Activated CD4-positive, alpha-beta T cell treated with anti-CD3 and anti-CD28 coated beads for 36 hours (primary cell): ENCODE measurements at regions of chr11 and their contacts with region 1.

Region 1: GRCh38 chr11:118435893-118436624 is at the start of gene KMT2A:
- DNase-seq: peak; percentile 96
- ATAC-seq: peak; percentile 41
- H3K4me3 Mint-ChIP-seq: peak within 1 kb of the TSS; percentile 94
- H3K27ac Mint-ChIP-seq: peak within 1 kb of the TSS; percentile 94
- H3K4me1 Mint-ChIP-seq: peaks cover 37% of the 10 kb centered on the region
- H3K27me3 Mint-ChIP-seq: no peaks in the 10 kb centered on the region
- total RNA-seq, gene KMT2A: 64.1 to 67.1 TPM

Region 2: GRCh38 chr11:117817368-117818040 is 618.6 kb before region 1 on chr11:
- CTCF ChIA-PET with region 1: no interaction called
- POLR2A ChIA-PET with region 1: no interaction called
- intact Hi-C with region 1: loop called in 1 of 2 experiments (anchors 5 kb)
- DNase-seq: peak; percentile 95
- ATAC-seq: peak; percentile 45
- H3K4me3 Mint-ChIP-seq: peak overlapping the region; percentile 49
- H3K27ac Mint-ChIP-seq: peak overlapping the region; percentile 99
- H3K4me1 Mint-ChIP-seq: peaks cover 59% of the 10 kb centered on the region
- H3K27me3 Mint-ChIP-seq: no peaks in the 10 kb centered on the region

Region 3: DNA sequence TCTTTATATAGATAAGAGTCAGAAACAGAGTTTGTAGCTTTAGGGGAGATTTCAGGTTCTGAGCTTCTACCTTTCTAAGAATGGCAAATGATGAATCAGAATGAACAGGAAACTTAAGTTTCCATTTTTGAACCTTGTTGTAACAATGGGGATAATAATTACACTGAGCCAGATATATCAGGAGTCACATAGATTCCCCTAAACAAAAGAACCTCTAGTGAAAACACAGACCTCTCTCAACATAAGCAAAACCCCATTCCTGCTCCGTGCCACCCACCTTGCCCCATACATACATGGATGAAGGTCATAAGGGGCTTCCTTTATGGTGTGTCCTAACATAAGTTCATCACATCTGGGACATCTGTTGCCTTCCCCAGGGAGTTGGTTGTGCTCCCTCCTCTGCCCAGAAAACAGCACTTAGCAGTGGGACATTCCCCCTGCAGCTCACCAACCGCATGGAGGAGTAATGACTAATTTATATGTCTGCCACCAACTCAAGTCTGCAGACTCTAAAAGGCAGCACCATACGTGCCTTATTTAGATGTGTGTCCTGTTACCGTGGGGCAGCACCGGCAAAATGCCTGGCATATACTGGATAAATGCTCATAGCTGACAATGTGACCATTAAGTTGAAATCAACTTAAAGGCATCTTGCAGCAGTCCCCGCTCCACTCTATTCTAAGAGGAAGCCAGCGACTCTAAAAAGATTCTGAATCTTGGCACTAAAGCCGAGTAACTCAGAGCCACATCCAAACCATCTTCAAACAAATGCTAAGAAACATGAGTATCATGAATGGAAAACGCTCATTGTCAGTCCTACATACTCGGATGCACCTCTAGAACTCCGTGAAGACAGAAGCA is 219.2 kb before region 1 on chr11:
- CTCF ChIA-PET with region 1: no interaction called
- POLR2A ChIA-PET with region 1: interaction called, 3 read pairs
- intact Hi-C with region 1: loop called (anchors 5 kb)
- DNase-seq: peak; percentile 76
- ATAC-seq: peak; percentile 73
- H3K4me3 Mint-ChIP-seq: peak overlapping the region; percentile 76
- H3K27ac Mint-ChIP-seq: peak overlapping the region; percentile 100
- H3K4me1 Mint-ChIP-seq: peaks cover 97% of the 10 kb centered on the region
- H3K27me3 Mint-ChIP-seq: no peaks in the 10 kb centered on the region

Region 4: DNA sequence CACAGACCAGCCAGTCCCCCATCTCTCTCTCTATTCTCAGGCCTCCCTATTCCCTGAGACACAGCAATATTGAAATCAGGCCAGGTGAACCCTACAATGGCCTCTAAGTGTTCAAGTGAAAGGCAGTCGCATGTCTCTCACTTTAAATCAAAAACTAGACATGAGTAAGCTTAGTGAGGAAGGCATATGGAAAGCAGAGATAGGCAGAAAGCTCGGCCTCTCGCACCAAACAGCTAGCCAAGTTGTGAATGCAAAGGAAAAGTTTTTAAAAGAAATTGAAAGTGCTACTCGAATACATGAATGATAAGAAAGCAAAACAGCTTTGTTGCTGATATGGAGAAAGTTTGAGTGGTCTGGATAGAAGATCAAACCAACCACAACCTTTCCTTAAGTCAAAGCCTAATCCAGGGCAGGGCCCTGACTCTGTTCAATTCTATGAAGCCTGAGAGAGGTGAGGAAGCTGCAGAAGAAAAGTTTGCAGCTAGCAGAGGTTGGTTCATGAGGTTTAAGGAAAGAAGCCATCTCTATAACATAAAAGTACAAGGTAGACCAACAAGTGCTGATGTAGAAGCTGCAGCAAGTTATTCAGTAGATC is 152.2 kb before region 1 on chr11:
- CTCF ChIA-PET with region 1: no interaction called
- POLR2A ChIA-PET with region 1: interaction called, 10 read pairs
- intact Hi-C with region 1: no loop called
- DNase-seq: peak; percentile 53
- ATAC-seq: peak; percentile 78
- H3K4me3 Mint-ChIP-seq: no peak overlapping the region
- H3K27ac Mint-ChIP-seq: peak overlapping the region; percentile 69
- H3K4me1 Mint-ChIP-seq: peaks cover 52% of the 10 kb centered on the region
- H3K27me3 Mint-ChIP-seq: no peaks in the 10 kb centered on the region

Region 5: GRCh38 chr11:118401151-118401878 is 34.7 kb before region 1 on chr11 and contains the start of gene ATP5MG:
- CTCF ChIA-PET with region 1: interaction called, 7 read pairs
- POLR2A ChIA-PET with region 1: interaction called, 8 read pairs
- intact Hi-C with region 1: loop called (anchors 1 to 2 kb)
- DNase-seq: peak; percentile 96
- ATAC-seq: peak; percentile 63
- H3K4me3 Mint-ChIP-seq: peak within 1 kb of the TSS; percentile 93
- H3K27ac Mint-ChIP-seq: peak within 1 kb of the TSS; percentile 100
- H3K4me1 Mint-ChIP-seq: peaks cover 64% of the 10 kb centered on the region
- H3K27me3 Mint-ChIP-seq: no peaks in the 10 kb centered on the region
- total RNA-seq, gene ATP5MG: 136 to 229 TPM

Region 6: GRCh38 chr11:118488480-118489109 is 52.5 kb after region 1 on chr11:
- CTCF ChIA-PET with region 1: interaction called, 8 read pairs
- POLR2A ChIA-PET with region 1: interaction called, 3 read pairs
- intact Hi-C with region 1: loop called (anchors 1 kb)
- DNase-seq: peak; percentile 90
- ATAC-seq: peak; percentile 71
- H3K4me3 Mint-ChIP-seq: no peak overlapping the region
- H3K27ac Mint-ChIP-seq: peak overlapping the region; percentile 10
- H3K4me1 Mint-ChIP-seq: peaks cover 5% of the 10 kb centered on the region
- H3K27me3 Mint-ChIP-seq: no peaks in the 10 kb centered on the region

Region 7: GRCh38 chr11:118997627-118998387 is 561.7 kb after region 1 on chr11 and contains the start of gene CENATAC:
- CTCF ChIA-PET with region 1: no interaction called
- POLR2A ChIA-PET with region 1: no interaction called
- intact Hi-C with region 1: loop called in 1 of 2 experiments (anchors 2 kb)
- DNase-seq: peak; percentile 98
- ATAC-seq: peak; percentile 93
- H3K4me3 Mint-ChIP-seq: peak within 1 kb of the TSS; percentile 88
- H3K27ac Mint-ChIP-seq: peak within 1 kb of the TSS; percentile 98
- H3K4me1 Mint-ChIP-seq: peaks cover 32% of the 10 kb centered on the region
- H3K27me3 Mint-ChIP-seq: no peaks in the 10 kb centered on the region
- total RNA-seq, gene CENATAC: 23.7 to 26.2 TPM